ENCODE measurements at regions of chr5 and their contacts with region 1.

Region 1: DNA sequence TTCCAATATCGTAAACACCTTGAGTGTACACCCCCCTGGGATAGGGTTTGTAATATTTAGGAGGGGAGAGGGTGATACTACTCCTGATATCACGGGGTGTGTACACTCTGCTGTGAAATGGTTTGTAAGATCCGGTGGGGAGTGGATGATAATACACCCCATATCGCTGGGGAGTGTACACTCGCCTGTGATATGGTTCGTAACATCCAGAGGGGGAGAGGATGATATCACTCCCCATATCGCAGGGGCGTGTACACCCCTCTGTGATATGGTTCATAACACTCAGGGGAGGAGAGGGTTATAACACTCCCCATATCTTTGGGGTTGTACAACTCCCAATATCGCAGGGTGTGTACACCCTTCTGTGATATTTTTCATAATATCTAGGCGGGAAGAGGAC is 33.8 kb upstream of the SLC25A48 start:
- DNase-seq: peak; percentile 58
- H3K4me3 Mint-ChIP-seq: no peak overlapping the region
- H3K27ac Mint-ChIP-seq: no peak overlapping the region
- H3K4me1 Mint-ChIP-seq: no peaks in the 10 kb centered on the region
- H3K27me3 Mint-ChIP-seq: no peaks in the 10 kb centered on the region

Region 2: DNA sequence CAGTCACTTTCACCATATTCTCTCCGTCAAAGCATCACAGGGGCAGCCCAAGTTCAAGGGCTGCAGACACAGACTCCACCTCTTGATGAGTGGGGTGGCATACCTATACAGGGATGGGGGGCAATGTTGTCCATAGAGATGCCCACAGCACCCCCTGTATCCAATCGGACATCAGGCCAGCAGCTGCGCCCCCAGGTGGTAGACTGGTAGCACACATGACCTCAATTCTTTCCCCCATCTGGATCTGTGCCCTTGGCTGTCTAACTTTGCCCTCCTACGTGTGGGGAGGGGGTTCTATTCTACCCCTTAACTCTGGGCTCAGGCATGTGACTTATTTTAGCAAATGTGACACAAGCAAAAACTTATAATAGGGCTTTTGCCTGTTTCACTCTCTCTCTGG is 50.1 kb before region 1 on chr5:
- intact Hi-C with region 1: loop called (anchors 5 kb)
- DNase-seq: no peak
- H3K4me3 Mint-ChIP-seq: no peak overlapping the region
- H3K27ac Mint-ChIP-seq: no peak overlapping the region
- H3K4me1 Mint-ChIP-seq: no peaks in the 10 kb centered on the region
- H3K27me3 Mint-ChIP-seq: no peaks in the 10 kb centered on the region